ENCODE measurements at regions of chr11 and their contacts with region 1.

Region 1: GRCh38 chr11:17354601-17354991 is 3.0 kb downstream of the NCR3LG1 start:
- DNase-seq: peak; percentile 80 to 84
- ATAC-seq: peak in 1 of 2 experiments; percentile 55; a peak in 3 of 6 replicates
- H3K4me3 ChIP-seq: peak overlapping the region; percentile 51; the same call in 2 of the 3 replicates
- H3K27ac ChIP-seq: no peak overlapping the region
- H3K4me1 ChIP-seq: no peaks in the 10 kb centered on the region; the same call in 2 of the 3 replicates
- CTCF ChIP-seq: peak; percentile 81
- EP300 ChIP-seq: no peak
- POLR2A ChIP-seq: no peak
- RAD21 ChIP-seq: peak in 1 of 2 experiments; percentile 44; a peak in 3 of 5 replicates

Region 2: GRCh38 chr11:17276236-17277023 is 78.2 kb before region 1 on chr11 and contains the start of gene NUCB2:
- CTCF ChIA-PET with region 1: interaction called, 4 read pairs
- POLR2A ChIA-PET with region 1: interaction called, 11 read pairs
- DNase-seq: peak; percentile 95
- ATAC-seq: peak; percentile 97 to 99
- H3K4me3 ChIP-seq: peak within 1 kb of the TSS; percentile 85
- H3K27ac ChIP-seq: peak within 1 kb of the TSS; percentile 82 to 95
- H3K4me1 ChIP-seq: peaks cover 11% of the 10 kb centered on the region
- CTCF ChIP-seq: no peak
- EP300 ChIP-seq: no peak
- POLR2A ChIP-seq: peak; percentile 81
- RAD21 ChIP-seq: no peak
- polyA plus RNA-seq, gene NUCB2: 78.5 and 92.5 TPM in 2 replicates

Region 3: GRCh38 chr11:17366495-17366894 is 11.9 kb after region 1 on chr11:
- CTCF ChIA-PET with region 1: interaction called, 31 read pairs
- POLR2A ChIA-PET with region 1: interaction called, 4 read pairs
- DNase-seq: no peak
- ATAC-seq: no peak
- H3K4me3 ChIP-seq: no peak overlapping the region
- H3K27ac ChIP-seq: no peak overlapping the region
- H3K4me1 ChIP-seq: no peaks in the 10 kb centered on the region
- CTCF ChIP-seq: no peak
- EP300 ChIP-seq: no peak
- POLR2A ChIP-seq: no peak
- RAD21 ChIP-seq: no peak

Measured in A549 (cell line).